ENCODE measurements at regions of chr13 and their contacts with region 1.

Region 1: GRCh38 chr13:27339299-27339698 is 68.7 kb downstream of the RASL11A start:
- DNase-seq: peak; percentile 71
- ATAC-seq: peak; percentile 85
- H3K4me3 ChIP-seq: no peak overlapping the region
- H3K27ac ChIP-seq: no peak overlapping the region
- H3K4me1 ChIP-seq: no peaks in the 10 kb centered on the region
- H3K27me3 ChIP-seq: no peaks in the 10 kb centered on the region
- CTCF ChIP-seq: peak; percentile 59

Region 2: DNA sequence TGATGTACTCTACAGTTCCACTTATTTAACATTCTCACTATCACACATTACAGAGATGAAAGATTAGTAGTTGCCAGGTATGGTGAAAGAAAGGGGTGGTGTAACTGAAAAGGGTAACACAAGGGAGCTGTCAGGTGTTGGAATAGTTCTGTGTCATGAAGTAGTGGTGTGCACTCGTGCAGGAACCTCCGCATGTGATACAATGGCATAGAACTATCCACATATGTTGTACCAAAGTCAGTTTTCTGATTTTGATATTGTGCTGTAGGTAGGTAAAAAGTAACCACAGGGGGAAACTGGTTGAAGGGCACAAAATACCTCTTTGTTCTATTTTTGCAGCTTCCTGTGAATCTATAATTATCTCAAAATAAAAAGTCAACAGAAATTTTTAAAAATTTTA is 112.3 kb before region 1 on chr13:
- CTCF ChIA-PET with region 1: no interaction called
- POLR2A ChIA-PET with region 1: no interaction called
- intact Hi-C with region 1: no loop called
- DNase-seq: no peak
- ATAC-seq: no peak
- H3K4me3 ChIP-seq: no peak overlapping the region
- H3K27ac ChIP-seq: no peak overlapping the region
- H3K4me1 ChIP-seq: no peaks in the 10 kb centered on the region
- H3K27me3 ChIP-seq: no peaks in the 10 kb centered on the region
- CTCF ChIP-seq: no peak

Region 3: DNA sequence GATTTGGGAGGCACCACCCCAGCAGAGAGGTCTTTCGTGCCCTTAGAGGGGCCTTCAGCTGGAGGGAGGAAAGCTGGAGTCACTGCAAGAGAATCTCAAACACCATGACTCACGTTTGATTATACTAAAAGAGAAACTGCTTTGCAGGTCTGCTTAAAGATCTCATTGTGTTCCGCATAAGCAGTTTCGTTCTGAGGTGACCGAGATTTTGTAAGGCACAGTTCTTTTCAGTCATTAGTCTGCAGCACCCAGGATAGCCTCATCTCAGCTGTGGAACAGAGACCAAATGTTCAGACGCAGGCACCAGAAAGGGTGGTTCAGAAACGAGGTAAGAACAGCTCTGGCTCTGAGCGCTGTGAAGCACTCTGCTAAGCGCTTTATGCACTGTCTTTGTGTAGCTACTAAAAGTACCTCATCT is 13.9 kb after region 1 on chr13:
- CTCF ChIA-PET with region 1: interaction called, 10 read pairs
- POLR2A ChIA-PET with region 1: no interaction called
- intact Hi-C with region 1: no loop called
- DNase-seq: peak; percentile 74
- ATAC-seq: peak; percentile 90
- H3K4me3 ChIP-seq: peak overlapping the region; percentile 60
- H3K27ac ChIP-seq: peak overlapping the region; percentile 28
- H3K4me1 ChIP-seq: peaks cover 12% of the 10 kb centered on the region
- H3K27me3 ChIP-seq: no peaks in the 10 kb centered on the region
- CTCF ChIP-seq: no peak

Region 4: GRCh38 chr13:27523346-27524073 is 184.2 kb after region 1 on chr13:
- CTCF ChIA-PET with region 1: no interaction called
- POLR2A ChIA-PET with region 1: no interaction called
- intact Hi-C with region 1: no loop called
- DNase-seq: no peak
- ATAC-seq: no peak
- H3K4me3 ChIP-seq: no peak overlapping the region
- H3K27ac ChIP-seq: no peak overlapping the region
- H3K4me1 ChIP-seq: no peaks in the 10 kb centered on the region
- H3K27me3 ChIP-seq: peaks cover 16% of the 10 kb centered on the region
- CTCF ChIP-seq: no peak

Measured in PC-3 (cell line).